IMR-90 (cell line): ENCODE measurements at regions of chr1 and their contacts with region 1.

Region 1: DNA sequence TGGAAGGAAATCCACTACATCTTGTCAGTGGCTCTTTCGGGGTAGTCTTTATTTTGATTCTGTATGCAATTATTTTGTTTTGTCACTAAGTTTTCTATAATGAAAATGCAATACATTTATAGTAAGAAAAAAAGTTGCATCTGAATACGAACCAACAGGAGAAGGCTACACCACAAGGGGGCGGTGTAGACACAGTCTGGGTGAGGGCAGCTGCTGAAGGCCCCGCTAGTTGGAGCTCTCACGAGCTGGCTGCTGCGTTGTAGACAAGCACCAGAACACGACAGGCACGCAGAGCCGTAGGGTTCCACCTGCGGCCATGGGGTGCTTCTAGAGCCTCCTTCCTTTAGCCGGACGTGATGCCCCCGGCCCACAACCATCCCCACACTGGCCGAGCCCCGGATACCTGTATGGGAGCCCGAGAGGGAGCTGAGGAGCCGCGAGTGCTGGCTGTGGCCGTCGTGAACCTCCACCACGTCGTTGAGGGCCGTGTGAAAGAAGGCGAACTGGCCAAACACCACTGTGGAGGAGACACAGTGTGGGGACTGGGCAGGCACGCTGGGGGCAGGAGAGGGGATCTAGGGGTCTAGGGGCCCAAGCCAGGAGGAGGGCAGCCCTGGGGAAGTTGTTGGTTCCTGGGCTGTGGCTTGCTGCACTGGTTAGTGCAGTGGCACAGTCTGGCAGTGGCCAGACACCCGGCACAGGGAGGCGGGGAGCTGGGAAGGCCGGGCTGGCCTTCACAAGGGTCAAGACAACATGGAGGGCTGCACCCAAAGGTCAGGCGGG is 160.8 kb downstream of the ZSCAN20 start:
- DNase-seq: peak; percentile 76
- ATAC-seq: peak; percentile 96
- H3K4me3 ChIP-seq: no peak overlapping the region
- H3K27ac ChIP-seq: no peak overlapping the region
- H3K4me1 ChIP-seq: no peaks in the 10 kb centered on the region
- H3K27me3 ChIP-seq: no peaks in the 10 kb centered on the region
- CTCF ChIP-seq: peak; percentile 99
- POLR2A ChIP-seq: no peak
- RAD21 ChIP-seq: peak; percentile 67

Region 2: GRCh38 chr1:34162852-34163766 is 529.9 kb after region 1 on chr1:
- CTCF ChIA-PET with region 1: no interaction called
- POLR2A ChIA-PET with region 1: no interaction called
- dilution Hi-C with region 1: no loop called
- in situ Hi-C with region 1: no loop called
- intact Hi-C with region 1: loop called (anchors 1 kb)
- DNase-seq: peak; percentile 74
- ATAC-seq: peak; percentile 88
- H3K4me3 ChIP-seq: peak overlapping the region; percentile 19; the same call in 1 of the 2 replicates
- H3K27ac ChIP-seq: no peak overlapping the region
- H3K4me1 ChIP-seq: no peaks in the 10 kb centered on the region; the same call in 1 of the 2 replicates
- H3K27me3 ChIP-seq: peaks cover 15% of the 10 kb centered on the region
- CTCF ChIP-seq: peak; percentile 59
- POLR2A ChIP-seq: no peak
- RAD21 ChIP-seq: peak; percentile 68

Region 3: GRCh38 chr1:34511802-34512201 is 878.6 kb after region 1 on chr1:
- CTCF ChIA-PET with region 1: no interaction called
- POLR2A ChIA-PET with region 1: no interaction called
- dilution Hi-C with region 1: no loop called
- in situ Hi-C with region 1: no loop called
- intact Hi-C with region 1: no loop called
- DNase-seq: no peak
- ATAC-seq: no peak
- H3K4me3 ChIP-seq: no peak overlapping the region
- H3K27ac ChIP-seq: no peak overlapping the region
- H3K4me1 ChIP-seq: no peaks in the 10 kb centered on the region
- H3K27me3 ChIP-seq: no peaks in the 10 kb centered on the region
- CTCF ChIP-seq: no peak
- POLR2A ChIP-seq: no peak
- RAD21 ChIP-seq: no peak

Region 4: GRCh38 chr1:34597877-34598514 is 964.8 kb after region 1 on chr1:
- CTCF ChIA-PET with region 1: no interaction called
- POLR2A ChIA-PET with region 1: no interaction called
- dilution Hi-C with region 1: no loop called
- in situ Hi-C with region 1: no loop called
- intact Hi-C with region 1: loop called (anchors 1 kb)
- DNase-seq: peak; percentile 6
- ATAC-seq: peak; percentile 68
- H3K4me3 ChIP-seq: no peak overlapping the region
- H3K27ac ChIP-seq: no peak overlapping the region
- H3K4me1 ChIP-seq: no peaks in the 10 kb centered on the region
- H3K27me3 ChIP-seq: no peaks in the 10 kb centered on the region
- CTCF ChIP-seq: peak; percentile 41
- POLR2A ChIP-seq: no peak
- RAD21 ChIP-seq: peak; percentile 55

Region 5: GRCh38 chr1:34681480-34682451 is 1048.6 kb after region 1 on chr1:
- CTCF ChIA-PET with region 1: no interaction called
- POLR2A ChIA-PET with region 1: no interaction called
- dilution Hi-C with region 1: no loop called
- in situ Hi-C with region 1: no loop called
- intact Hi-C with region 1: loop called (anchors 1 kb)
- DNase-seq: peak; percentile 28
- ATAC-seq: peak; percentile 87
- H3K4me3 ChIP-seq: no peak overlapping the region
- H3K27ac ChIP-seq: no peak overlapping the region
- H3K4me1 ChIP-seq: no peaks in the 10 kb centered on the region
- H3K27me3 ChIP-seq: no peaks in the 10 kb centered on the region
- CTCF ChIP-seq: peak; percentile 55
- POLR2A ChIP-seq: no peak
- RAD21 ChIP-seq: peak; percentile 49

Region 6: DNA sequence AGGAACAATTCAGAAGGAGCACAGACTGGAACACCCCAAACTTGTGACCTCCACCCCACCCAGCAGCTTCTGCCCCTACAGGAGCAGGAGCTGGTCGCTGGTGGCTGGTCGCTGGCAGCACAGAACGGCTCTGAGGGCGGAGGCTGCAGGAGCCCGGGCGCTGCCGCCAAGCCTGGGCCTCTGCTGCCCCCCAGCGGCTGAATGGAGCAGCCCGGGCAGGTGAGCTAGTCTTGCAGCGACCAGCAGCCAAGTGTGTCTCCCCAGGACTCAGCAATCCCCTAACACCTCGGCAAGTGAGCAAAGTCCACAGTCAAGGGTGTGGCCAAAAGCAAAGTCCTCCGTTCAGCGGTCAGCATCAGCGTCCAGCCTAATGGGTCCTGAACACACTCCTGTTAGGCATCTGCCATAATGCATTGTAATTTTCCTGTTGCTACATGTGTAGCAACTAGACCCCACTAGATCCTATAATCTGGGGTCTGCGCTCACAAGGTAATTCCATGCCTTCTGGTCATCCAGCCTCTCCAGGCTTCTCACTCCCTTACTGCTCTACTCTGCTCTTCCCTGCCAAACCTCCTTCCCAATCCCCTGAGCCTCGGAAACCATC is 1109.6 kb after region 1 on chr1:
- CTCF ChIA-PET with region 1: interaction called, 26 read pairs
- POLR2A ChIA-PET with region 1: interaction called, 4 read pairs
- dilution Hi-C with region 1: no loop called
- in situ Hi-C with region 1: loop called (anchors 10 kb)
- intact Hi-C with region 1: no loop called
- DNase-seq: peak; percentile 41
- ATAC-seq: peak; percentile 99
- H3K4me3 ChIP-seq: no peak overlapping the region
- H3K27ac ChIP-seq: no peak overlapping the region
- H3K4me1 ChIP-seq: no peaks in the 10 kb centered on the region
- H3K27me3 ChIP-seq: peaks cover 3% of the 10 kb centered on the region; the same call in 1 of the 2 replicates
- CTCF ChIP-seq: peak; percentile 87
- POLR2A ChIP-seq: no peak
- RAD21 ChIP-seq: peak; percentile 83